ENCODE measurements at regions of chr12 and their contacts with region 1.

Region 1: GRCh38 chr12:119659289-119659897 is 8.5 kb upstream of the PRKAB1 start:
- DNase-seq: peak; percentile 42
- H3K4me3 ChIP-seq: no peak overlapping the region
- H3K27ac ChIP-seq: no peak overlapping the region
- H3K4me1 ChIP-seq: no peaks in the 10 kb centered on the region
- H3K27me3 ChIP-seq: peaks cover 3 to 6% of the 10 kb centered on the region in 2 experiments
- CTCF ChIP-seq: peak; percentile 62 to 70
- POLR2A ChIP-seq: no peak

Region 2: DNA sequence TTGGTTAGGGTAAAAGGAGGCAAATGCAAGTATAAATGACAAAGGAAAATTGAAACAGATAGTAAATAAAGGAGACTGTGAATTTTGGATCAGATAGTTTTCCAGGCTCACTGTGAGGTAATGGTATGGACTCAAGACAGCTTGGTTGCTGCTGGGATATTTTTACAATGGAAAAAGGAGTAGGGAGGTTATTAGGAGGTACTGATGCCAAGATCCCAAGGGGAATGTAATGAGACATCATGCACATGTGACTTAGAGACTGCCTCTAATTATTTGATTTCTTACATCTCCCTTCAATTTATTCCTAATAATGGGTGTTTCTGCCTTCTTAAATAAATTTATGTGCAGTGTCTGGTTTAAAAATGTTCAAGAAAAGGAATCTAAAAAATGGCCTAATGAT is 1343.6 kb before region 1 on chr12:
- CTCF ChIA-PET with region 1: no interaction called
- POLR2A ChIA-PET with region 1: no interaction called
- dilution Hi-C with region 1: no loop called
- intact Hi-C with region 1: no loop called
- DNase-seq: no peak
- H3K4me3 ChIP-seq: no peak overlapping the region
- H3K27ac ChIP-seq: no peak overlapping the region
- H3K4me1 ChIP-seq: no peaks in the 10 kb centered on the region
- H3K27me3 ChIP-seq: no peaks in the 10 kb centered on the region
- CTCF ChIP-seq: no peak
- POLR2A ChIP-seq: no peak

Region 3: DNA sequence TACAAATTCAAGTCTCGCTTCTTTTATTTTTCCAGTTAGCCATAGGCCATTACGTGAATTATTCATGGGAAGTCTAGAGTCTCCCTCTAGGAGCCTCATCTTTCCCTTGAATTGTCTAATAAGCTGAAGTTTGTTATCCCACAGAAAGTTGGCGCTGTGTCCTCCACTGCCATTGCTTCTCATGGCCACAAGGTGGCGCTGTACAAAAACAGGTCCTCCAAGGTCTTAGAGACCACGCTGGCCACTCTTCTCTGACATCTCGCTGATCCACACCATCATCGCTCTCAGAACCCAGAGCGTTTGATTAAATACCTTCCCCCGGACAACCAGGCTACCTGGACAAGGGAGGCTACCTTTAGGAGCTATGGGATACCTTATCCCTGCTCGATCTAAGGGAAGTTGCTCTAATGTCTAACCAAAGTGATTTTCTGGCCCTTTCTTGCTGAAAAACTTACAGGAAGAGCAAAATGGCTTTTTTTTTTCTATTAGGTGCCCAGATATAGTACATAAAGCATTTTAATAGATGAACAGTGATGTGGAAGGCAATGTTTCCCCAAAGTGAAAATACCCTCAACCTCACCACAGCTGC is 214.8 kb before region 1 on chr12:
- CTCF ChIA-PET with region 1: interaction called, 11 read pairs
- POLR2A ChIA-PET with region 1: no interaction called
- dilution Hi-C with region 1: no loop called
- intact Hi-C with region 1: no loop called
- DNase-seq: peak; percentile 28
- H3K4me3 ChIP-seq: no peak overlapping the region
- H3K27ac ChIP-seq: no peak overlapping the region
- H3K4me1 ChIP-seq: no peaks in the 10 kb centered on the region
- H3K27me3 ChIP-seq: no peaks in the 10 kb centered on the region
- CTCF ChIP-seq: peak; percentile 60 to 90
- POLR2A ChIP-seq: no peak

Region 4: DNA sequence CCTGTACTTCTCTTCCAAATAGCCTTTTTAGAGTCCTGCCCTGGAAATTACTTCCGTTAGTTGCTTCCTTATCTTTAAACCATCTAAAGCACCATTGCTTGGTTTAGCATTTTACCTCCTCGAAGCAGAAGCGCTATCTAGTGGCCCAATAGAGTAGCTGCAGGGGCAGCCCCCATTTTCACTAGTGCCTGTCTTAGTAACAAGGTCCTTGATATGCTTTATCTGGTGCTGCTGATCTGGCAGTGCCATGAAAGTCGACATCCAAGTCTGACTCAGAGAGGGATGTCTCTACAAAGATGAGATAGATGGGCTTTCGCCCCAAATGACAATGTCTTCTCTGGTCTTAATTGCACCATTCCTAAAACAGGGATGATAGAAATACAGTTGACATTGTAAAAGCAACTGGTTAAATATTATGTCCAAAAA is 242.7 kb after region 1 on chr12:
- CTCF ChIA-PET with region 1: interaction called, 7 read pairs
- POLR2A ChIA-PET with region 1: no interaction called
- dilution Hi-C with region 1: no loop called
- intact Hi-C with region 1: loop called (anchors 2 kb)
- DNase-seq: peak; percentile 79
- H3K4me3 ChIP-seq: no peak overlapping the region
- H3K27ac ChIP-seq: no peak overlapping the region
- H3K4me1 ChIP-seq: no peaks in the 10 kb centered on the region
- H3K27me3 ChIP-seq: peaks cover 3 to 4% of the 10 kb centered on the region in 2 experiments
- CTCF ChIP-seq: peak; percentile 72 to 84
- POLR2A ChIP-seq: no peak

Region 5: GRCh38 chr12:119938049-119938667 is 278.8 kb after region 1 on chr12:
- CTCF ChIA-PET with region 1: interaction called, 6 read pairs
- POLR2A ChIA-PET with region 1: no interaction called
- dilution Hi-C with region 1: no loop called
- intact Hi-C with region 1: loop called (anchors 2 kb)
- DNase-seq: peak; percentile 51
- H3K4me3 ChIP-seq: no peak overlapping the region
- H3K27ac ChIP-seq: no peak overlapping the region
- H3K4me1 ChIP-seq: no peaks in the 10 kb centered on the region
- H3K27me3 ChIP-seq: no peaks in the 10 kb centered on the region
- CTCF ChIP-seq: peak; percentile 76 to 83
- POLR2A ChIP-seq: no peak

Measured in endothelial cell of umbilical vein (primary cell).